Dendritic cell treated with granulocyte-macrophage colony-stimulating factor and Interleukin-4, amounts not matched to agents 40 ng/mL and 50 ng/mL, for 4 days (primary cell): ENCODE measurements at regions of chr22 and their contacts with region 1.

Region 1: DNA sequence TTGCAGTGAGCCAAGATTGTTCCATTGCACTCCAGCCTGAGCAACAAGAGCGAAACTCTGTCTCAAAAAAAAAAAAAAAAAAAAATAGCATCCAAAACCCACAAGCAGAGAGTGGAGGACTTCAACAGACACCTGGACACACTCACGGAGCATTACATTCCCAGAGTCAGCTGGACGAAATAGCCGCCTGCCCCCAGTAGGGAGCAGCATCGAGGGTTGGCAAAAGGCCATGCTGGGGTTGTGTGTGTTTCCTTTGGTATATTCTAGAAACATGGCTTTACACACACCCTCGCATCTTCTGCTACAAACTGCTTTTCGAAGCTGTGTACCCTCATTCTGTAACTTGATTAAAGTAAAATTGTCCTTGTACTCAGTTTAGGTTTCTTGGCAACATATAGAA is 5.3 kb downstream of the ADA2 start:
- H3K4me3 Mint-ChIP-seq: peak overlapping the region; percentile 2
- H3K27ac Mint-ChIP-seq: peak overlapping the region; percentile 85
- H3K4me1 Mint-ChIP-seq: peaks cover 61% of the 10 kb centered on the region
- H3K27me3 Mint-ChIP-seq: no peaks in the 10 kb centered on the region

Region 2: GRCh38 chr22:17199003-17199731 is 14.8 kb before region 1 on chr22:
- intact Hi-C with region 1: no loop called
- H3K4me3 Mint-ChIP-seq: no peak overlapping the region
- H3K27ac Mint-ChIP-seq: peak overlapping the region; percentile 62
- H3K4me1 Mint-ChIP-seq: peaks cover 44% of the 10 kb centered on the region
- H3K27me3 Mint-ChIP-seq: no peaks in the 10 kb centered on the region

Region 3: GRCh38 chr22:17243524-17243923 is 29.5 kb after region 1 on chr22:
- intact Hi-C with region 1: loop called (anchors 1 kb)
- H3K4me3 Mint-ChIP-seq: peak overlapping the region; percentile 55
- H3K27ac Mint-ChIP-seq: peak overlapping the region; percentile 97
- H3K4me1 Mint-ChIP-seq: peaks cover 78% of the 10 kb centered on the region
- H3K27me3 Mint-ChIP-seq: no peaks in the 10 kb centered on the region

Region 4: DNA sequence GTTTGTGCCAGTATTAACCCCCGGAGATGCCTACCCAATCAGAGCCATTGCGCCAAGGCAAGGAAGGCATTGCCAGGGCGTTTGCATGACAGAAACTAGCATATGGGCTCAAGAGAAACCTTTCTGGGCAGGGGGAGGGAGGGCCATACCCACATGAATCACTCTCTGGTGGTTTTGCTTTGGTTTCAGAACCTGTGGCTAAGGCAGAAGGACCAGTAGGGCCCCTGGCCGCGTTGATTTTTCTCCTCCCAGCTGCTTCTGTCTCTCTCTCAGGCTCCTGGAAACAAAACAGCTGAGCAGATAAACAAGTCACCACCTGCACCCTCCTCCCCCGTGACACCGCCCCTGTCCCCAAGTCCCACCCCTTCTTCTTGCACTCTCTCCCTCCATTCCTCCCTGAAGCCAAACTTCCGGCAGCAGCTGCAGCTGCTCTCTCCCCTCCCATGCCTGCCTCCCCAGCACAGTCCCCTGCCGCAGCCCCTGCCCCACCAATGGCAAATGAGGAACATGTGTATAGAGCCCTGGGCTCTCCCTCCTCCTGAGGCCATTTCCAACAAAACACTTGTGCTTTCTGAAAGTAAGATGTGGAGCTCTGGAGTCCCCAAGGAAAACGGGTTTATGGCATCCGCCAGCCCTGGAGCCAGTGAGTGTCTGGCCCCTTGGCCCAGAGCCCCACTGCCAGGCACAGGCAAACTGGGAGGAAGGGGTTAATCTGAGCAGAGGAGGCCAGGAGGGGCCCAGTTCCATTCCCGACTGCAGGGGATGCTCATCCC is 44.2 kb after region 1 on chr22:
- intact Hi-C with region 1: loop called (anchors 5 kb)
- H3K4me3 Mint-ChIP-seq: peak overlapping the region; percentile 54
- H3K27ac Mint-ChIP-seq: peak overlapping the region; percentile 90
- H3K4me1 Mint-ChIP-seq: peaks cover 33% of the 10 kb centered on the region
- H3K27me3 Mint-ChIP-seq: no peaks in the 10 kb centered on the region

Region 5: DNA sequence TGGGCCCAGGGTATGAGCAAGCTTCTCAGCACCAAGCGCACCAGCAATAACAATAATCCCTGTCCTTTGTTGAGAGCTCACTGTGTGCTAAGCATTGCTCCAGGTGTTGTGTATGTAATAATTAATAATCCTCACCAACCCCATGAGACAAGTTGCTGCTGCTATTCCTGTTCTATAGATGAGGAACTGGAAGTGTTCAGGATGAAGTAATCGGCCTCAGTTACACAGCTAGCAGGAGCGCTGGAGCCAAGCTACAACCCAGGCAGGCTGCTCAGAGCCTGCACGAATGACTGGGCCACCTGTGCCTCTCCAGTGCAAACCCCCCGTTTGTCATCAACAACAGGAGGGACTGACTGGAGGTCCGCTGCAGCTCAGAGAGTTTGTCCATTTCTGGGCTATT is 120.1 kb after region 1 on chr22:
- intact Hi-C with region 1: no loop called
- H3K4me3 Mint-ChIP-seq: no peak overlapping the region
- H3K27ac Mint-ChIP-seq: peak overlapping the region; percentile 28
- H3K4me1 Mint-ChIP-seq: peaks cover 13% of the 10 kb centered on the region
- H3K27me3 Mint-ChIP-seq: peaks cover 11% of the 10 kb centered on the region

Region 6: GRCh38 chr22:17368554-17369438 is 154.8 kb after region 1 on chr22:
- intact Hi-C with region 1: loop called (anchors 10 kb)
- H3K4me3 Mint-ChIP-seq: peak overlapping the region; percentile 67
- H3K27ac Mint-ChIP-seq: peak overlapping the region; percentile 22
- H3K4me1 Mint-ChIP-seq: peaks cover 26% of the 10 kb centered on the region
- H3K27me3 Mint-ChIP-seq: peaks cover 79% of the 10 kb centered on the region

Region 7: DNA sequence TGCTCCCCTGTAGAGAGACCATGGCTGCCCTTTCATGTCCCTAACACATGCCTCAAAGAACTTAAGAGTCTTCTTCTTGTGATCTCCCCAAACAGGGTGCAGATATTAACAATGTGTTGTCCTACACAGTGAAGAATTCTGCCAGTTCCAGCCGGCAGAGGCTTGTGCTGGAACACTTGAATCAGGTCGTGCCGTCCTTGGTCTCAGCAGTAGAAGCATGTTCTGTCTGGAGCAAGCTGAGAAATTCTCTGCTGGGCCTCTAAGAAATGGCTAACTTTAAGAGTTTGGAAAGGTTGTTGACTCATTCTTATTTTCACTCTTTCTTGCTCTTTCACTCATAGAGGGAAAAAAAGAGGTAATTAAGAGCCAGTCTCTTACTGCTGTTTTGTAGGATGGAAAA is 278.3 kb after region 1 on chr22:
- intact Hi-C with region 1: loop called (anchors 2 kb)
- H3K4me3 Mint-ChIP-seq: no peak overlapping the region
- H3K27ac Mint-ChIP-seq: no peak overlapping the region
- H3K4me1 Mint-ChIP-seq: peaks cover 25% of the 10 kb centered on the region
- H3K27me3 Mint-ChIP-seq: no peaks in the 10 kb centered on the region